ENCODE measurements at regions of chr14 and their contacts with region 1.

Region 1: GRCh38 chr14:70086685-70087379 is 101.9 kb downstream of the SLC8A3 start:
- DNase-seq: peak; percentile 35
- H3K4me3 ChIP-seq: no peak overlapping the region
- H3K27ac ChIP-seq: no peak overlapping the region
- H3K4me1 ChIP-seq: no peaks in the 10 kb centered on the region
- H3K27me3 ChIP-seq: no peaks in the 10 kb centered on the region
- CTCF ChIP-seq: peak; percentile 34 to 51
- POLR2A ChIP-seq: no peak

Region 2: GRCh38 chr14:70096866-70097265 is 10.0 kb after region 1 on chr14:
- CTCF ChIA-PET with region 1: interaction called, 10 read pairs
- POLR2A ChIA-PET with region 1: no interaction called
- dilution Hi-C with region 1: no loop called
- intact Hi-C with region 1: no loop called
- DNase-seq: peak; percentile 3
- H3K4me3 ChIP-seq: no peak overlapping the region
- H3K27ac ChIP-seq: no peak overlapping the region
- H3K4me1 ChIP-seq: no peaks in the 10 kb centered on the region
- H3K27me3 ChIP-seq: peaks cover 0 to 6% of the 10 kb centered on the region in 2 experiments
- CTCF ChIP-seq: peak in 1 of 2 donors; percentile 33
- POLR2A ChIP-seq: no peak

Region 3: GRCh38 chr14:70317969-70318634 is 231.3 kb after region 1 on chr14:
- CTCF ChIA-PET with region 1: interaction called, 56 read pairs
- POLR2A ChIA-PET with region 1: no interaction called
- dilution Hi-C with region 1: no loop called
- intact Hi-C with region 1: loop called (anchors 1 kb)
- DNase-seq: peak; percentile 35
- H3K4me3 ChIP-seq: no peak overlapping the region
- H3K27ac ChIP-seq: no peak overlapping the region
- H3K4me1 ChIP-seq: no peaks in the 10 kb centered on the region
- H3K27me3 ChIP-seq: peaks cover 0 to 2% of the 10 kb centered on the region in 2 experiments
- CTCF ChIP-seq: peak; percentile 15 to 44
- POLR2A ChIP-seq: no peak

Region 4: DNA sequence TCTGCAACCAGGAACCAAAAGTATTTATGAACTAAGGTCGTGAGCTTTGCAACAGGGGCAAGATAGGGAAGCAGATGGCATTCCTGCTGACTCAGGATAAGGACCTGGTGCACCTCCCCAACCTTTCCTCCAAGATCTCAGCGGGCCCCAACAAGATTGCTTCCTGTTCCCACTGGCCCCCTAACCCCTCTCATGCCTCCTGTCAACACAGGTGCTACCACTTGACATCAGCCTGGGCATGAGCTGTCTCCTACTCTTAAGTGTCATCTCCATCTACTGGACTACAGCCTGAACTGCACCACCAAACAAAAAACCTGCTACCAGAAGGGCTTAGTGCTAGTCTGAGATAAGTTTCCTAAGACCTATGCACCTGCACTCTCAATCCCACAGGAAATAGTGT is 481.0 kb after region 1 on chr14:
- CTCF ChIA-PET with region 1: interaction called, 79 read pairs
- POLR2A ChIA-PET with region 1: no interaction called
- dilution Hi-C with region 1: no loop called
- intact Hi-C with region 1: loop called (anchors 1 kb)
- DNase-seq: peak; percentile 51
- H3K4me3 ChIP-seq: no peak overlapping the region
- H3K27ac ChIP-seq: no peak overlapping the region
- H3K4me1 ChIP-seq: no peaks in the 10 kb centered on the region
- H3K27me3 ChIP-seq: no peaks in the 10 kb centered on the region
- CTCF ChIP-seq: peak; percentile 56 to 65
- POLR2A ChIP-seq: no peak

Measured in endothelial cell of umbilical vein (primary cell).